CD8-positive, alpha-beta T cell (primary cell): ENCODE measurements at regions of chr12 and their contacts with region 1.

Region 1: GRCh38 chr12:55829967-55830600 is 697 bp upstream of the DNAJC14 start:
- DNase-seq: peak in 7 of 9 experiments; percentile 15 to 63 (median 48)
- ATAC-seq: peak; percentile 16
- H3K4me3 ChIP-seq: peak overlapping the region; percentile 65 to 93
- H3K4me3 Mint-ChIP-seq: peak overlapping the region; percentile 99
- H3K27ac ChIP-seq: peak overlapping the region; percentile 71 to 79
- H3K27ac Mint-ChIP-seq: peak overlapping the region; percentile 95
- H3K4me1 ChIP-seq: peaks cover 45% of the 10 kb centered on the region
- H3K4me1 Mint-ChIP-seq: peaks cover 56% of the 10 kb centered on the region
- H3K27me3 ChIP-seq: no peaks in the 10 kb centered on the region
- H3K27me3 Mint-ChIP-seq: no peaks in the 10 kb centered on the region
- CTCF ChIP-seq: no peak

Region 2: GRCh38 chr12:55817346-55818139 is 12.5 kb before region 1 on chr12 and contains the starts of genes ORMDL2 and SARNP:
- CTCF ChIA-PET with region 1: interaction called, 42 read pairs
- POLR2A ChIA-PET with region 1: interaction called, 115 read pairs
- intact Hi-C with region 1: loop called (anchors 1 kb)
- DNase-seq: peak; percentile 88 to 100 (median 94)
- ATAC-seq: peak; percentile 91
- H3K4me3 ChIP-seq: peak within 1 kb of the TSS; percentile 81 to 89
- H3K4me3 Mint-ChIP-seq: no peak within 1 kb of the TSS
- H3K27ac ChIP-seq: peak within 1 kb of the TSS; percentile 81 to 89
- H3K27ac Mint-ChIP-seq: no peak within 1 kb of the TSS
- H3K4me1 ChIP-seq: peaks cover 38% of the 10 kb centered on the region
- H3K4me1 Mint-ChIP-seq: peaks cover 44% of the 10 kb centered on the region
- H3K27me3 ChIP-seq: no peaks in the 10 kb centered on the region
- H3K27me3 Mint-ChIP-seq: no peaks in the 10 kb centered on the region
- CTCF ChIP-seq: no peak
- total RNA-seq, gene ORMDL2: 13.2 to 15.1 TPM
- total RNA-seq, gene SARNP: 48.0 to 50.3 TPM

Region 3: GRCh38 chr12:55931780-55932550 is 101.9 kb after region 1 on chr12:
- CTCF ChIA-PET with region 1: interaction called, 14 read pairs
- POLR2A ChIA-PET with region 1: interaction called, 68 read pairs
- intact Hi-C with region 1: loop called (anchors 1 kb)
- DNase-seq: peak in 7 of 9 experiments; percentile 18 to 69 (median 46)
- ATAC-seq: no peak
- H3K4me3 ChIP-seq: peak overlapping the region; percentile 82 to 91
- H3K4me3 Mint-ChIP-seq: peak overlapping the region; percentile 99
- H3K27ac ChIP-seq: peak overlapping the region; percentile 65 to 90
- H3K27ac Mint-ChIP-seq: peak overlapping the region; percentile 95
- H3K4me1 ChIP-seq: peaks cover 60% of the 10 kb centered on the region
- H3K4me1 Mint-ChIP-seq: peaks cover 63% of the 10 kb centered on the region
- H3K27me3 ChIP-seq: no peaks in the 10 kb centered on the region
- H3K27me3 Mint-ChIP-seq: no peaks in the 10 kb centered on the region
- CTCF ChIP-seq: no peak

Region 4: DNA sequence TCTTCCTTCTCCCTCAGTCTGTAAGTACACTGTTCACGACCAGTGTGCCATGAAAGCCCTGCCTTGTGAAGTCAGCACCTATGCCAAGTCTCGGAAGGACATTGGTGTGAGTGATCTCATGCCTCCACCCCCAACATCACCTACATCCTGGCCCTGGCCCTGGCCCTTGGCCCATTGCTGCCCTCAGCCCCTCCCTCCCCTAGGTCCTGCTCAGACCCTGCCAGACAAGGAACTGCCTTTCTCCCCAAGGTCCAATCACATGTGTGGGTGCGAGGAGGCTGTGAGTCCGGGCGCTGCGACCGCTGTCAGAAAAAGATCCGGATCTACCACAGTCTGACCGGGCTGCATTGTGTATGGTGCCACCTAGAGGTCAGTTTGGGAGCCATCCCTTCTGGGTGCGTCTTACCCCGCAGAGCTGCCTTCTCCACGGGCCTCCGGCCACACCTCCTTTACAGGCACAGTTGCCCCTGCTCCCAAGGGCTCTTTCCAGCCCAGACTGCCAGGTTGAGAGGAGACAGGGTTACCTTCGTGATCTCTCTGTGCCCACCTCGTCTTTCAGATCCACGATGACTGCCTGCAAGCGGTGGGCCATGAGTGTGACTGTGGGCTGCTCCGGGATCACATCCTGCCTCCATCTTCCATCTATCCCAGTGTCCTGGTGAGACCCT is 110.1 kb after region 1 on chr12:
- CTCF ChIA-PET with region 1: interaction called, 7 read pairs
- POLR2A ChIA-PET with region 1: interaction called, 38 read pairs
- intact Hi-C with region 1: no loop called
- DNase-seq: peak; percentile 68 to 91 (median 87)
- ATAC-seq: peak; percentile 92
- H3K4me3 ChIP-seq: no peak overlapping the region
- H3K4me3 Mint-ChIP-seq: peak overlapping the region; percentile 52
- H3K27ac ChIP-seq: peak overlapping the region in 1 of 2 experiments; percentile 60
- H3K27ac Mint-ChIP-seq: peak overlapping the region; percentile 87
- H3K4me1 ChIP-seq: peaks cover 55% of the 10 kb centered on the region
- H3K4me1 Mint-ChIP-seq: peaks cover 84% of the 10 kb centered on the region
- H3K27me3 ChIP-seq: no peaks in the 10 kb centered on the region
- H3K27me3 Mint-ChIP-seq: no peaks in the 10 kb centered on the region
- CTCF ChIP-seq: peak; percentile 84